Natural killer cell (primary cell): ENCODE measurements at regions of chr6 and their contacts with region 1.

Region 1: DNA sequence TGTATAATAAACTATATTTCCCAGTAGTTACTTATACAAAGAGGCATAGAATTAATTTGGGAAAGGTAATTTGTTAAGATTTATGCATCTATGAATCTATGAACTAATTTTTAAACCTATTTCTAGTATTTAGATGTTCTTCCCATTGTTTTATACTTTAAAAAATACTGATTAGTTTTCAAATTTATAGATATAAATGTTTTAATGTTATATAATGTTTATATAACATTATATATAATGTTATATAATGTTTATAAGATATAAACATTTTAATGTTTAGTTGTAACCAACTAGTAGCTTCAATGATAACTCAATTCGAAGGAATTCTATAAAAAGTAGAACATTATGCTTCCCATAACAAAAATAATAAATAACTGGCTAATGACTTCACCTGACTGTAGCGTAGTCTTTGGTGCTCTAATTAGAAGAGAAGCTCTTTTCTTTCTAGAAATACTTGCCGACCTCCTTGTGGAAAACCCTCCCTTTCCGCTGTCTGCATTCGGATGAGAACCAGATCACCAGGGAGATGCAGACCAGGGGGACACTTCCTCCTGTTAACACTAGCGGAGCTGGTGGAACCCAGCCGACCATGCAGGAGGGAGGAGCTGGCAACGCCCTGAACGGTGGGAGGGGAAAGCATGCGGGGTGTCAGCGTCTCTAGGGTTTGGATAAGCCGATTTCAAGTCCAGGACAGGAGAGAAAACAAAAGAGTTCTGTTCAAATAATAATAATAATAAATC is 158.4 kb downstream of the OR2B2 start:
- DNase-seq: peak; percentile 19 to 75
- ATAC-seq: no peak
- H3K4me3 ChIP-seq: peak overlapping the region; percentile 81
- H3K4me3 Mint-ChIP-seq: peak overlapping the region; percentile 99
- H3K27ac ChIP-seq: no peak overlapping the region
- H3K27ac Mint-ChIP-seq: peak overlapping the region; percentile 95 to 100
- H3K4me1 ChIP-seq: peaks cover 15% of the 10 kb centered on the region
- H3K4me1 Mint-ChIP-seq: peaks cover 32 to 37% of the 10 kb centered on the region in 2 donors
- H3K27me3 ChIP-seq: no peaks in the 10 kb centered on the region
- H3K27me3 Mint-ChIP-seq: peaks cover 2 to 9% of the 10 kb centered on the region in 2 donors
- CTCF ChIP-seq: no peak

Region 2: DNA sequence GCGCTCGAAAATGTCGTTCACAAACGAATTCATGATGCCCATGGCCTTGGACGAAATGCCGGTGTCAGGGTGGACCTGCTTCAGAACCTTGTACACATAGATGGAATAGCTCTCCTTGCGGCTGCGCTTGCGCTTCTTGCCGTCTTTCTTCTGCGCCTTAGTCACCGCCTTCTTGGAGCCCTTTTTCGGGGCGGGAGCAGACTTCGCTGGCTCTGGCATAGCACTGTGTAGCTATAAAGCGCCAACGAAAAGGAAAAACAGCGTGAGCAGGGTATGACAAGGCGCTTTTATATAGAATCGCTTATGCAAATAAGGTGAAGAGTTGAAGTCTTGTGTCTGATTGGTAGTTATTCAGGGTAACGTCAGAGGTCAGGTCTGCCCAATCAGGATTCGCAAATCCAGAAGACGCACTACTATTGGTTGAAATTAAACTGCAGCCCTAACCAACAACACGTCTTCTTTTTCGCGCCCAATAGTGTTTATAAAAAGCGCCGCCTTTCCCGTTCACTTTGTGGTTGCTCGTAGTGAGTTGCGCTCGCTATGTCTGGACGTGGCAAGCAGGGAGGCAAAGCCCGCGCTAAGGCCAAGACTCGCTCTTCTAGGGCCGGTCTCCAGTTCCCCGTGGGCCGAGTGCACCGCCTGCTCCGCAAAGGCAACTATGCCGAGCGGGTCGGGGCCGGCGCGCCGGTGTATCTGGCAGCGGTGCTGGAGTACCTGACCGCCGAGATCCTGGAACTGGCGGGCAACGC is 621.1 kb before region 1 on chr6:
- intact Hi-C with region 1: loop called (anchors 5 kb)
- DNase-seq: peak; percentile 87 to 98
- ATAC-seq: peak; percentile 82 to 95 (median 87)
- H3K4me3 ChIP-seq: peak overlapping the region; percentile 65
- H3K4me3 Mint-ChIP-seq: no peak overlapping the region
- H3K27ac ChIP-seq: peak overlapping the region; percentile 85
- H3K27ac Mint-ChIP-seq: no peak overlapping the region
- H3K4me1 ChIP-seq: peaks cover 29% of the 10 kb centered on the region
- H3K4me1 Mint-ChIP-seq: peaks cover 5 to 6% of the 10 kb centered on the region in 2 donors
- H3K27me3 ChIP-seq: no peaks in the 10 kb centered on the region
- H3K27me3 Mint-ChIP-seq: no peaks in the 10 kb centered on the region
- CTCF ChIP-seq: no peak

Region 3: DNA sequence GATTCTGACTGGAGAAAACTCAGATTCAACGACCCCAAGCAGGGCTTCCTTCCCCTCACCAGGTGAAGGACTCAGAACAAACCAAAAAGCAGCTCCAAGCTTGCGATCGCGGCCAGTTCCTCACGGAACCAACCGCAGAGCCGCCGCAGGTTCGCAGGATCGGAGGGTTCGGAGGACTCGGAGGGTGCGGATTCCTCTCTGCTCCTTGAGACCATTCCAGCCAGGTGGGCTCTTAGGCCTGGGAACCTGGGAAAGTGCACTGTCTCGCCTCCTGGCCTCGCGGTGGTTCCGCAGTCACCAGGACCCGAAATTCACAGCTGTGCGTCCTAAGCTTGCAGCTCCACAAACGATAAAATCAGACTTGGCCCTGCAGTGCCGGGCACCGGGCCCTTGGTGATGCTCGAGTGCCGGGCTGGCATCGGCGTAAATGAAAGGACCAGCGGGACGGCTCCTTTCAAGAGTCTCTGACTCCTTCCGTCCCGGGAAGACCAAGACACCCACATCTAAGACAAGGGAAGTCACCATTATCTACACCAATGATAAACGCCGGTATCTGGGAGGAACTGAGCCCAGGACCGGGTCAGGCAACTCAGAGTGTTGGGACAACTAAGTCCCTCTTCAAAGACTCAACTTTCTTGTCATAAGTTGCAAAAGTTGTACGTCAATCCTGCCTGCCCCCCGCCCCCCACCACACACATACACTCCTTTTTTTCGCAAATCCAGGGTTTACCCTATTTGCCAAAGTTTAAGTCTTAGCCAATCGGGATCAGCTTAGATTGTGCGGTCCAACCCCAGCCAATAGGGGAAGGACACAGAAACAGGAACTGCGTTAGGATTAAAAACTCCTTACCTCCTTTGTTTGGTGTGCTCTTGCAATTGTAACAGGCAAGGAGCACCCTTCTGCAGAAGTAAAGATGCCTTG is 576.1 kb before region 1 on chr6:
- intact Hi-C with region 1: loop called (anchors 2 kb)
- DNase-seq: peak; percentile 70 to 86
- ATAC-seq: peak; percentile 79 to 88 (median 83)
- H3K4me3 ChIP-seq: peak overlapping the region; percentile 81
- H3K4me3 Mint-ChIP-seq: peak overlapping the region; percentile 95
- H3K27ac ChIP-seq: peak overlapping the region; percentile 66
- H3K27ac Mint-ChIP-seq: peak overlapping the region; percentile 92 to 98
- H3K4me1 ChIP-seq: peaks cover 13% of the 10 kb centered on the region
- H3K4me1 Mint-ChIP-seq: peaks cover 25 to 26% of the 10 kb centered on the region in 2 donors
- H3K27me3 ChIP-seq: no peaks in the 10 kb centered on the region
- H3K27me3 Mint-ChIP-seq: peaks cover 0 to 9% of the 10 kb centered on the region in 2 donors
- CTCF ChIP-seq: peak; percentile 59

Region 4: DNA sequence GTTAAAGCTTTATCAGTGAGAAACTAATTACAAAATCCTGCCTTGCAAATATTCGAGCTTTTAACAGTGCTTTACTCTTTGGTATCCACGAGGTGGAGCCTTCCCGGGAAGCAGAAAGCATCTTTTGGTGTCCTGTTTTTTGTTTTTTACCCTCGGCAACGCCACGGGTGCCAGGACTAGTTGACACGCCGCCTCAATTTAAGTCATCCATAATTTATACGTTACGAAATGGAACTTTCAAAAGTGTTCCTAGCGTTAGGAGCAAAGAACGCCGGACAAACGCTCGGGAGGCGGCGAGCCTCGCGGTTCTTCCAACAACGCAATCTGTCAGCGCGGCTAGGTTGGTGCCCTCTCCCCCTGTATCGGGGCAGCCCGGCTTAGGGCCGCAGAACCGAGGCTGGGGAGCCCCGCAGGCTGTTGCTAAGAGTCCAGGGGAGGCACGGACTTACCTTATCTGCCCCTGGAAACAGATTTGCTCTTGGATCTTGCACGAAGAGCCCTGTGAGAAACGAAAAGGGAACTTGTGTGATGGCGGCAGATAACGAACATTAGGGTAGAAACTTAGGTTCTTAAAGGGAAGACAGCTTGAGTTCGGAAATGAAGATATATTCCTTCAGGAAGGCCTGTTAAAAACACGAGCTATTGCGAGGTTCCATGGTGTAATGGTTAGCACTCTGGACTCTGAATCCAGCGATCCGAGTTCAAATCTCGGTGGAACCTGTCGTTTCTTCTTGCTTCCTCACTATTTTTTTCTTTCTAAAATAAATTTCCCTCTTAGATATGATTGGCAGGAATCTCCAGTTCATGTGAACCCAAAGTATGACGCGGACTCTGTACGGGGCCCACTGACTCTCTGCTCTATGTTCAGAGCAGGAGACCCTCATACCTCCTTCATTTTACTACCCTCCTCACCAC is 234.7 kb before region 1 on chr6:
- intact Hi-C with region 1: loop called (anchors 1 kb)
- DNase-seq: peak; percentile 49 to 88
- ATAC-seq: peak; percentile 61 to 81 (median 81)
- H3K4me3 ChIP-seq: peak overlapping the region; percentile 82
- H3K4me3 Mint-ChIP-seq: peak overlapping the region; percentile 91
- H3K27ac ChIP-seq: peak overlapping the region; percentile 71
- H3K27ac Mint-ChIP-seq: peak overlapping the region; percentile 87 to 88
- H3K4me1 ChIP-seq: peaks cover 11% of the 10 kb centered on the region
- H3K4me1 Mint-ChIP-seq: peaks cover 16 to 17% of the 10 kb centered on the region in 2 donors
- H3K27me3 ChIP-seq: peaks cover 9% of the 10 kb centered on the region
- H3K27me3 Mint-ChIP-seq: peaks cover 29 to 46% of the 10 kb centered on the region in 2 donors
- CTCF ChIP-seq: peak; percentile 79

Region 5: GRCh38 chr6:27674882-27675281 is 79.0 kb before region 1 on chr6:
- intact Hi-C with region 1: no loop called
- DNase-seq: no peak
- ATAC-seq: no peak
- H3K4me3 ChIP-seq: no peak overlapping the region
- H3K4me3 Mint-ChIP-seq: no peak overlapping the region
- H3K27ac ChIP-seq: no peak overlapping the region
- H3K27ac Mint-ChIP-seq: no peak overlapping the region
- H3K4me1 ChIP-seq: peaks cover 8% of the 10 kb centered on the region
- H3K4me1 Mint-ChIP-seq: peaks cover 19% of the 10 kb centered on the region in 2 donors
- H3K27me3 ChIP-seq: peaks cover 72% of the 10 kb centered on the region
- H3K27me3 Mint-ChIP-seq: peaks cover 64 to 87% of the 10 kb centered on the region in 2 donors
- CTCF ChIP-seq: no peak

Region 6: GRCh38 chr6:27687154-27688013 is 66.5 kb before region 1 on chr6:
- intact Hi-C with region 1: loop called (anchors 2 kb)
- DNase-seq: peak; percentile 67 to 88
- ATAC-seq: peak; percentile 75 to 83 (median 76)
- H3K4me3 ChIP-seq: peak overlapping the region; percentile 52
- H3K4me3 Mint-ChIP-seq: peak overlapping the region; percentile 95
- H3K27ac ChIP-seq: no peak overlapping the region
- H3K27ac Mint-ChIP-seq: peak overlapping the region; percentile 94 to 96
- H3K4me1 ChIP-seq: peaks cover 12% of the 10 kb centered on the region
- H3K4me1 Mint-ChIP-seq: peaks cover 14 to 22% of the 10 kb centered on the region in 2 donors
- H3K27me3 ChIP-seq: peaks cover 2% of the 10 kb centered on the region
- H3K27me3 Mint-ChIP-seq: peaks cover 8 to 32% of the 10 kb centered on the region in 2 donors
- CTCF ChIP-seq: peak; percentile 53